ENCODE measurements at regions of chr9 and their contacts with region 1.

Region 1: GRCh38 chr9:125889476-125890419 is 142.6 kb downstream of the PBX3 start:
- DNase-seq: peak; percentile 28 to 46 (median 38)
- ATAC-seq: peak; percentile 91
- H3K4me3 ChIP-seq: peak overlapping the region; percentile 46
- H3K4me3 Mint-ChIP-seq: peak overlapping the region; percentile 81 to 95 (median 83)
- H3K27ac ChIP-seq: no peak overlapping the region
- H3K27ac Mint-ChIP-seq: peak overlapping the region in 3 of 9 donors; percentile 13 to 63 (median 18)
- H3K4me1 ChIP-seq: peaks cover 5 to 6% of the 10 kb centered on the region in 2 donors
- H3K4me1 Mint-ChIP-seq: peaks cover 5 to 22% (median 15%) of the 10 kb centered on the region in 7 donors
- H3K27me3 ChIP-seq: no peaks in the 10 kb centered on the region
- H3K27me3 Mint-ChIP-seq: peaks cover 14 to 69% (median 28%) of the 10 kb centered on the region in 5 donors

Region 2: GRCh38 chr9:125820100-125820804 is 69.5 kb before region 1 on chr9:
- CTCF ChIA-PET with region 1: no interaction called
- POLR2A ChIA-PET with region 1: no interaction called
- intact Hi-C with region 1: loop called in 1 of 2 experiments (anchors 5 kb)
- DNase-seq: peak in 6 of 9 donors; percentile 11 to 54 (median 34)
- ATAC-seq: peak; percentile 55
- H3K4me3 ChIP-seq: no peak overlapping the region
- H3K4me3 Mint-ChIP-seq: peak overlapping the region in 2 of 10 donors; percentile 2 to 18
- H3K27ac ChIP-seq: no peak overlapping the region
- H3K27ac Mint-ChIP-seq: peak overlapping the region in 7 of 9 donors; percentile 21 to 81 (median 39)
- H3K4me1 ChIP-seq: peaks cover 12 to 18% of the 10 kb centered on the region in 2 donors
- H3K4me1 Mint-ChIP-seq: peaks cover 10 to 50% (median 31%) of the 10 kb centered on the region in 7 donors
- H3K27me3 ChIP-seq: no peaks in the 10 kb centered on the region
- H3K27me3 Mint-ChIP-seq: peaks cover 0 to 6% (median 0%) of the 10 kb centered on the region in 5 donors

Region 3: DNA sequence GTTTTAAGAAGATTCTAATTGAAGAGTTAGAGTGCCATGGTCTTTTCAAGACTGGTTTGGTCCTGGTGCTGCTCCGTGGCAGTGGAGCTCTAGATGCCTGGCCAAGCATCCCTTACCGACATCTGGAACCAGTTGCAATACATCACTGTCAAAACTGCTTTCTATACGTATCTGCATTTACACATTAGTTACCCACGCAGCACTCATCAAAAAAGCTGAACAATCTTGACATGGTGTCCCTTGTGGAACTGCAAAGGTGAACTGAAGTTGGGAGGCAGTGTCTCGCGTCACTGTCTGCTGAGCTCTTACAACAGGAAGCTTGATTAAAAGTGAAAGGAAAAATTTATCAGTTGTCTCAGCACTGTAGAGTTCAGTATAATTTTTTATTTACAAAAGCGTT is 60.0 kb before region 1 on chr9:
- CTCF ChIA-PET with region 1: no interaction called
- POLR2A ChIA-PET with region 1: interaction called, 4 read pairs
- intact Hi-C with region 1: loop called (anchors 5 kb)
- DNase-seq: peak; percentile 9 to 83 (median 74)
- ATAC-seq: peak; percentile 97
- H3K4me3 ChIP-seq: peak overlapping the region; percentile 82
- H3K4me3 Mint-ChIP-seq: peak overlapping the region; percentile 69 to 92 (median 90)
- H3K27ac ChIP-seq: peak overlapping the region; percentile 82
- H3K27ac Mint-ChIP-seq: peak overlapping the region; percentile 75 to 98 (median 95)
- H3K4me1 ChIP-seq: peaks cover 5 to 18% of the 10 kb centered on the region in 2 donors
- H3K4me1 Mint-ChIP-seq: peaks cover 11 to 53% (median 35%) of the 10 kb centered on the region in 7 donors
- H3K27me3 ChIP-seq: no peaks in the 10 kb centered on the region
- H3K27me3 Mint-ChIP-seq: no peaks in the 10 kb centered on the region